T-cell (primary cell): ENCODE measurements at regions of chr17 and their contacts with region 1.

Region 1: GRCh38 chr17:40763752-40764151 is 8.2 kb downstream of the KRT26 start:
- DNase-seq: no peak
- ATAC-seq: no peak
- H3K4me3 ChIP-seq: no peak overlapping the region
- H3K4me3 Mint-ChIP-seq: no peak overlapping the region
- H3K27ac ChIP-seq: no peak overlapping the region
- H3K27ac Mint-ChIP-seq: no peak overlapping the region
- H3K4me1 ChIP-seq: no peaks in the 10 kb centered on the region
- H3K4me1 Mint-ChIP-seq: no peaks in the 10 kb centered on the region
- H3K27me3 ChIP-seq: peaks cover 2 to 10% of the 10 kb centered on the region in 2 experiments
- H3K27me3 Mint-ChIP-seq: peaks cover 22 to 39% of the 10 kb centered on the region in 2 donors

Region 2: DNA sequence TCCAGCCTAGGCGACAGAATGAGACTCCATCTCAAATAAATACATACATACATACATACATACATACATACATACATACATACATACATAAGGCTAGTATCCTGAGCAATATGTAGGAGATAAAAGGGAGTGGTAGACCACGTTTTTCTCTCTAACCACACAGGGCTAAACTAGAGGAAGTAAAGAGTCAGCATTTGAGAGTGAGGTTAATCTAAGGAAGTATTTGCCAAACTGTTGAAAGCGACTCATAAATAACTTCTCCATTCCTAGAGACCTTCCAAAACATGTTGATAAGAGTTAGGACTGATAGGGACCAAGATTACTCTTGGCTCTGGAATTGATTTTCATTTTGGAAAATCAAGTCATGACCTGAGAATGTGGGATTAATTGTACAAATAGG is 1224.9 kb before region 1 on chr17:
- CTCF ChIA-PET with region 1: no interaction called
- POLR2A ChIA-PET with region 1: interaction called in 1 of 2 experiments, 11 read pairs
- DNase-seq: peak in 1 of 35 experiments; percentile 13
- ATAC-seq: peak; percentile 54 to 70 (median 66)
- H3K4me3 ChIP-seq: no peak overlapping the region
- H3K4me3 Mint-ChIP-seq: no peak overlapping the region
- H3K27ac ChIP-seq: no peak overlapping the region
- H3K27ac Mint-ChIP-seq: no peak overlapping the region
- H3K4me1 ChIP-seq: peaks cover 0 to 5% of the 10 kb centered on the region in 2 experiments
- H3K4me1 Mint-ChIP-seq: peaks cover 18 to 23% (median 19%) of the 10 kb centered on the region in 3 donors
- H3K27me3 ChIP-seq: no peaks in the 10 kb centered on the region
- H3K27me3 Mint-ChIP-seq: no peaks in the 10 kb centered on the region

Region 3: DNA sequence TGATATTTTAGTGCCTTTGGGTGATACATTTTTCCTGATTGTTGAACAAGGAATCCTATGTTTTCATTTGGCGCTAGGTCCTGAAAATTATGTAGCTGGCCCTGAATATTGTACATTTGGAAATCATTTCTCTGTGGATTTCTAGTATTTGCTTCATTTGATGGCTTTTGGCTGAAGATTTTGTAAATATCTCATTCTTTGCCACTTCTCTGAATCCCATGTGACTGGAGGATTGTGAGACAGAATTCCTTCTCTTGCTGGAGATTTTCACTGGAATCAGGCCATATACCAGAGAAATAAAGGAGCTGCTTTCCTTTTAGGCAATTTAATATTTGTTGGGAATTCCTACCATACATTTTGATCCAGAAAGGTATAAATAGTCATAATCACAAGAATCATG is 27.4 kb after region 1 on chr17:
- CTCF ChIA-PET with region 1: interaction called in 1 of 2 experiments, 14 read pairs
- POLR2A ChIA-PET with region 1: no interaction called
- DNase-seq: no peak
- ATAC-seq: no peak
- H3K4me3 ChIP-seq: no peak overlapping the region
- H3K4me3 Mint-ChIP-seq: no peak overlapping the region
- H3K27ac ChIP-seq: no peak overlapping the region
- H3K27ac Mint-ChIP-seq: no peak overlapping the region
- H3K4me1 ChIP-seq: no peaks in the 10 kb centered on the region
- H3K4me1 Mint-ChIP-seq: no peaks in the 10 kb centered on the region
- H3K27me3 ChIP-seq: peaks cover 0 to 16% of the 10 kb centered on the region in 2 experiments
- H3K27me3 Mint-ChIP-seq: peaks cover 21 to 31% of the 10 kb centered on the region in 2 donors